AG04450 (cell line): ENCODE measurements at regions of chr6 and their contacts with region 1.

Region 1: GRCh38 chr6:70353343-70353913 is 50.5 kb upstream of the COL9A1 start:
- DNase-seq: no peak
- H3K4me3 ChIP-seq: no peak overlapping the region
- H3K27ac ChIP-seq: no peak overlapping the region
- H3K27me3 ChIP-seq: peaks cover 2% of the 10 kb centered on the region
- CTCF ChIP-seq: no peak

Region 2: GRCh38 chr6:69069881-69070280 is 1283.5 kb before region 1 on chr6:
- CTCF ChIA-PET with region 1: interaction called, 12 read pairs
- POLR2A ChIA-PET with region 1: no interaction called
- DNase-seq: no peak
- H3K4me3 ChIP-seq: no peak overlapping the region
- H3K27ac ChIP-seq: no peak overlapping the region
- H3K27me3 ChIP-seq: no peaks in the 10 kb centered on the region
- CTCF ChIP-seq: no peak